GM12878 (cell line): ENCODE measurements at regions of chr16 and their contacts with region 1.

Region 1: GRCh38 chr16:88785106-88785924 is at the start of gene PIEZO1:
- DNase-seq: no peak
- ATAC-seq: peak; percentile 40
- H3K4me3 ChIP-seq: peak within 1 kb of the TSS; percentile 80
- H3K27ac ChIP-seq: peak within 1 kb of the TSS; percentile 75
- H3K4me1 ChIP-seq: peaks cover 31% of the 10 kb centered on the region
- H3K27me3 ChIP-seq: no peaks in the 10 kb centered on the region
- CTCF ChIP-seq: peak; percentile 71 to 94 (median 85)
- EP300 ChIP-seq: no peak
- POLR2A ChIP-seq: peak; percentile 92
- RAD21 ChIP-seq: peak; percentile 87
- polyA plus RNA-seq, gene PIEZO1: 1.3 to 7.2 TPM

Region 2: GRCh38 chr16:88452482-88453216 is 332.7 kb before region 1 on chr16:
- CTCF ChIA-PET with region 1: no interaction called
- POLR2A ChIA-PET with region 1: no interaction called
- RAD21 ChIA-PET with region 1: no interaction called
- SMC1A ChIA-PET with region 1: no interaction called
- in situ Hi-C with region 1: loop called (anchors 10 kb)
- intact Hi-C with region 1: no loop called
- DNase-seq: peak; percentile 67
- ATAC-seq: peak; percentile 72
- H3K4me3 ChIP-seq: peak overlapping the region; percentile 64
- H3K27ac ChIP-seq: peak overlapping the region; percentile 79
- H3K4me1 ChIP-seq: peaks cover 29% of the 10 kb centered on the region
- H3K27me3 ChIP-seq: peaks cover 0 to 2% of the 10 kb centered on the region in 2 experiments; a peak in 1 of 4 replicates
- CTCF ChIP-seq: no peak
- EP300 ChIP-seq: no peak
- POLR2A ChIP-seq: 0 out of 2 replicates have a peak, but pooled peaks have one; percentile 9
- RAD21 ChIP-seq: no peak

Region 3: DNA sequence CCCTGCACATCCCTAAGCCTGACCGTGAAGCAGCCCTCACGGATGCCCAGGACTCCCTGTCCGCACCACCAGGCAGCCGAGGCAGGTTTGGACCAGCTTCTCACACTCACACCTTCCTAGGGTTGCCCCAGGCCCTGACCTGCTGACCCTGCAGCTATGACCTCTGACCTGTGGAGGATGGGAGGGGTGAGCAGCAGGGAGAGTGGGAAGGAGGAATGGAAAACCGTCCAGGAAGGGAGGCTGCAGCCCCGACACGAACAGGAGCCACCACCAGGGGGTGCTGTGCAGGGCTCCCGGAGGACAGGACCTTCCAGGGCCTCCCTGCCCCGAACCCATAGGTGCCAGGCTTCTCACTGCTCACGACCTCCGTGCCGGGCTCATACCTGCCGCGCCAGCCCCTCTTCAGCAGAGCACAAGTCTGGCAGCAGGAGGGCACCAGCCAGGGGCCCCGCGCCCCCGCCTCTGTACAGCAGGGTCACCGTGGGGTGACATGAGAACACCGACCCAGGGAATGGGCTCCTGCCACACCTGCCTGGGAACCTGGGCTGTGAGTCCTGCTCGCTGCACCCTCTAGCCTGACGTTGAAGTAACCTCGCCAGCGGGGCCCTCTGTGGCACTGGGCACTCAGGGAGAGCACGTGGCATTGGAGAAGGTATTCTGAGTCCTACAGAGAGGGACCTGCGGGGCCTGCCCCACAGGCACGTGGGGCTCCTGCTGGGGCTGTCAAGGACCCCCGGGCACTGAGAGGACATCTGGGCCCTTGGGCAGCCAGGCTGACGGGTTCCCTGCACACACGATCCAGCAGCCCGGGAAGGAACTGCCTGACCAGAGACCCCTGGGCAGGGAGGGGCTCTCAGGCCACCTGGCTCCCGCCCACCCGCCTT is 41.4 kb before region 1 on chr16:
- CTCF ChIA-PET with region 1: interaction called, 10 read pairs
- POLR2A ChIA-PET with region 1: interaction called, 6 read pairs
- RAD21 ChIA-PET with region 1: interaction called, 4 read pairs
- SMC1A ChIA-PET with region 1: interaction called, 5 read pairs
- in situ Hi-C with region 1: no loop called
- intact Hi-C with region 1: loop called (anchors 2 kb)
- DNase-seq: no peak
- ATAC-seq: peak; percentile 56
- H3K4me3 ChIP-seq: no peak overlapping the region
- H3K27ac ChIP-seq: no peak overlapping the region
- H3K4me1 ChIP-seq: peaks cover 11% of the 10 kb centered on the region
- H3K27me3 ChIP-seq: no peaks in the 10 kb centered on the region
- CTCF ChIP-seq: peak; percentile 72 to 85 (median 80)
- EP300 ChIP-seq: no peak
- POLR2A ChIP-seq: no peak
- RAD21 ChIP-seq: peak; percentile 49

Region 4: GRCh38 chr16:88803264-88803987 is 18.1 kb after region 1 on chr16 and contains the start of gene CDT1:
- CTCF ChIA-PET with region 1: interaction called, 11 read pairs
- POLR2A ChIA-PET with region 1: interaction called, 6 read pairs
- RAD21 ChIA-PET with region 1: interaction called, 10 read pairs
- SMC1A ChIA-PET with region 1: interaction called, 3 read pairs
- in situ Hi-C with region 1: no loop called
- intact Hi-C with region 1: loop called (anchors 2 kb)
- DNase-seq: no peak
- ATAC-seq: peak; percentile 52
- H3K4me3 ChIP-seq: peak within 1 kb of the TSS; percentile 88
- H3K27ac ChIP-seq: peak within 1 kb of the TSS; percentile 87
- H3K4me1 ChIP-seq: peaks cover 18% of the 10 kb centered on the region
- H3K27me3 ChIP-seq: no peaks in the 10 kb centered on the region
- CTCF ChIP-seq: no peak
- EP300 ChIP-seq: no peak
- POLR2A ChIP-seq: peak; percentile 67
- RAD21 ChIP-seq: no peak
- polyA plus RNA-seq, gene CDT1: 0.50 to 1.9 TPM

Region 5: DNA sequence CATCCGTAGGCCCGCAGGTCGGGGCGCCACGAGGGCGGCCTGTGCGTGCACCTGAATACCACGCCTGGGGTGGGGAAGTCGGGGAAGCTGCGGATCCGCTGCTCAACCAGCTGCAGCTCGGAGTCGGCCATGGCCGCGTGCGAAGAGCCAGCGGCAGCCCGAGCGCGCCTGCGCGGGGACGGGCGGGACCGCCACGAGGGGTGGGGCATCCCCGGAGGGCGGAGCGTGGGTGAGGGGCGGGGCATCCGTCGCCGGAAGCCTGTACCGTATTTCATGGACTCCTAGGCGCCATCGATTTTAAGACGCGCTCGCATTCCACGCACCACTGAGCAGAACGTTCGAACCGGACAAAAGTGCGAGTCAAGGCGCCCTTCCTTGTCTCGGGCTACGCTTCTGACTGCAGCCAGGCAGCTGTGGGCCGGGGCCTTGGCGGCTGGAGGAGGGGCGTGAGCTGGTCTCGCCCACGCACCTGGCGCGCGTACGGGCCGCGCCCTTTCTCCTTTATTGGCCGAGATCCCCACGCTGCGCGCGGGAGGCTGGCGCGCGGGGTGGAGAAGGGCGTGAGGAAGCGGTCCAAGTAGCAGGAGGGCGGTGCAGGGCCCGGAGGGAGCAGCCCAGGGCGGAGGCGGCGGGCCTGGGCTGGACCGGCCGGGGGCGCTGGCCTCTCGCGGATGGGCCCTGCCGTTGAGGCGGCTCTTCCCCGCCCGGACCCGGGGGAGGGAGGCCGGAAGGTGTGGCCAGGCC is 26.6 kb after region 1 on chr16 and contains the start of gene APRT:
- CTCF ChIA-PET with region 1: interaction called, 13 read pairs
- POLR2A ChIA-PET with region 1: interaction called, 30 read pairs
- RAD21 ChIA-PET with region 1: interaction called, 13 read pairs
- SMC1A ChIA-PET with region 1: interaction called, 7 read pairs
- in situ Hi-C with region 1: no loop called
- intact Hi-C with region 1: no loop called
- DNase-seq: peak; percentile 83
- ATAC-seq: peak; percentile 83
- H3K4me3 ChIP-seq: peak within 1 kb of the TSS; percentile 85
- H3K27ac ChIP-seq: peak within 1 kb of the TSS; percentile 95
- H3K4me1 ChIP-seq: peaks cover 20% of the 10 kb centered on the region
- H3K27me3 ChIP-seq: no peaks in the 10 kb centered on the region
- CTCF ChIP-seq: peak in 2 of 3 experiments; percentile 39 to 56; a peak in 3 of 6 replicates
- EP300 ChIP-seq: no peak
- POLR2A ChIP-seq: peak; percentile 91
- RAD21 ChIP-seq: 0 out of 2 replicates have a peak, but pooled peaks have one; percentile 30
- polyA plus RNA-seq, gene APRT: 30.6 to 100 TPM